CD4-positive, alpha-beta memory T cell (primary cell): ENCODE measurements at regions of chr13 and their contacts with region 1.

Region 1: GRCh38 chr13:74287724-74288169 is 153.5 kb upstream of the KLF12 start:
- DNase-seq: peak; percentile 87 to 98 (median 93)
- H3K4me3 ChIP-seq: peak overlapping the region; percentile 1 to 5
- H3K4me3 Mint-ChIP-seq: peak overlapping the region; percentile 75 to 89 (median 84)
- H3K27ac ChIP-seq: peak overlapping the region; percentile 56
- H3K27ac Mint-ChIP-seq: peak overlapping the region; percentile 94 to 98 (median 97)
- H3K4me1 ChIP-seq: peaks cover 53% of the 10 kb centered on the region
- H3K4me1 Mint-ChIP-seq: peaks cover 50 to 72% (median 60%) of the 10 kb centered on the region in 4 donors
- H3K27me3 ChIP-seq: no peaks in the 10 kb centered on the region
- H3K27me3 Mint-ChIP-seq: peaks cover 0 to 3% of the 10 kb centered on the region in 2 donors

Region 2: DNA sequence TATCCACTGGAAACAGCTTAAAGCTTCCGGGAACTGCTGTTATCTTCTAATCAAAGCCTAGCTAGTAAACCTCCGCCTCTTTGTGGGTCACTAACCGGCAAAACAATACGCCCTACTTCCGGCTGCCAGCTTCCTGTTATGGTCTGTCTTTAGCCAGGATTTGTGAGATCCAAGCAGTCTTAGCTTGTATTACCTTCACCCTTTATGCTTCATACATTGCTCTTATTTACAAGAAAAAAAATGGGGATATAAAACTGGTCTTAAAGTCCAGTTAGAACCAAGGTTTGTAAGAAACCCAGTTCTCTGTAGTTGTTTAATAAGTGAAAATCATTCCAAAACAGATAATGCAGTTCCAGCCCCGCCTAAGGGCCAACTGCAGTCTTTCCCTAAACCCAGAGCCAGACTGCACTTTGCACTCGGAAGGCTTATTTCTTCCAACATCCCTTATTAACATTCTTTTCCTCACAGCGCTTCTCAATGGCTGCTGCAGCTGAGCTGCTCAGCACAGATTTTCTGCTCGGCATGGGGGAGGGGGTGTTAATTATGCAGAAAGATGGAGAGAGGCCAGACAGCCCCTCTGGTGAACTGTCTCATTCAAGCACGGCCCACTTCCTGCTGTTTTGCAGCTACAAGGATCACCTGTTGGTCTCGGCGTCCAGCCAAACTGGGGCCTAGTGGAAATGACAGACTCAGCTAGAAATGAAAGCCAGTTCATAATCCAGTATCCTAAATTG is 521.9 kb before region 1 on chr13:
- CTCF ChIA-PET with region 1: interaction called, 28 read pairs
- POLR2A ChIA-PET with region 1: interaction called, 30 read pairs
- intact Hi-C with region 1: loop called (anchors 5 kb)
- DNase-seq: peak; percentile 73 to 93 (median 78)
- H3K4me3 ChIP-seq: peak overlapping the region; percentile 14 to 40
- H3K4me3 Mint-ChIP-seq: peak overlapping the region; percentile 78 to 92 (median 84)
- H3K27ac ChIP-seq: peak overlapping the region; percentile 47
- H3K27ac Mint-ChIP-seq: peak overlapping the region; percentile 96 to 99 (median 96)
- H3K4me1 ChIP-seq: peaks cover 84% of the 10 kb centered on the region
- H3K4me1 Mint-ChIP-seq: peaks cover 72 to 86% (median 80%) of the 10 kb centered on the region in 4 donors
- H3K27me3 ChIP-seq: no peaks in the 10 kb centered on the region
- H3K27me3 Mint-ChIP-seq: no peaks in the 10 kb centered on the region

Region 3: GRCh38 chr13:73861136-73861535 is 426.6 kb before region 1 on chr13:
- CTCF ChIA-PET with region 1: interaction called, 13 read pairs
- POLR2A ChIA-PET with region 1: interaction called, 4 read pairs
- intact Hi-C with region 1: no loop called
- DNase-seq: peak in 2 of 5 donors; percentile 9 to 39
- H3K4me3 ChIP-seq: no peak overlapping the region
- H3K4me3 Mint-ChIP-seq: peak overlapping the region in 7 of 8 donors; percentile 9 to 78 (median 55)
- H3K27ac ChIP-seq: no peak overlapping the region
- H3K27ac Mint-ChIP-seq: peak overlapping the region; percentile 33 to 86 (median 66)
- H3K4me1 ChIP-seq: peaks cover 80% of the 10 kb centered on the region
- H3K4me1 Mint-ChIP-seq: peaks cover 48 to 57% (median 54%) of the 10 kb centered on the region in 4 donors
- H3K27me3 ChIP-seq: no peaks in the 10 kb centered on the region
- H3K27me3 Mint-ChIP-seq: no peaks in the 10 kb centered on the region

Region 4: GRCh38 chr13:74026753-74027152 is 261.0 kb before region 1 on chr13:
- CTCF ChIA-PET with region 1: interaction called, 15 read pairs
- POLR2A ChIA-PET with region 1: interaction called, 14 read pairs
- intact Hi-C with region 1: loop called (anchors 1 kb)
- DNase-seq: peak; percentile 63 to 88 (median 68)
- H3K4me3 ChIP-seq: peak overlapping the region in 1 of 2 donors; percentile 36
- H3K4me3 Mint-ChIP-seq: peak overlapping the region; percentile 79 to 93 (median 86)
- H3K27ac ChIP-seq: peak overlapping the region; percentile 54
- H3K27ac Mint-ChIP-seq: peak overlapping the region; percentile 87 to 97 (median 94)
- H3K4me1 ChIP-seq: peaks cover 83% of the 10 kb centered on the region
- H3K4me1 Mint-ChIP-seq: peaks cover 71 to 91% (median 81%) of the 10 kb centered on the region in 4 donors
- H3K27me3 ChIP-seq: no peaks in the 10 kb centered on the region
- H3K27me3 Mint-ChIP-seq: no peaks in the 10 kb centered on the region

Region 5: GRCh38 chr13:74070065-74070464 is 217.7 kb before region 1 on chr13:
- CTCF ChIA-PET with region 1: interaction called, 10 read pairs
- POLR2A ChIA-PET with region 1: interaction called, 40 read pairs
- intact Hi-C with region 1: loop called (anchors 2 kb)
- DNase-seq: peak; percentile 73 to 81 (median 75)
- H3K4me3 ChIP-seq: peak overlapping the region in 1 of 2 donors; percentile 43
- H3K4me3 Mint-ChIP-seq: peak overlapping the region; percentile 68 to 89 (median 79)
- H3K27ac ChIP-seq: peak overlapping the region; percentile 15
- H3K27ac Mint-ChIP-seq: peak overlapping the region; percentile 73 to 94 (median 89)
- H3K4me1 ChIP-seq: peaks cover 92% of the 10 kb centered on the region
- H3K4me1 Mint-ChIP-seq: peaks cover 64 to 85% (median 77%) of the 10 kb centered on the region in 4 donors
- H3K27me3 ChIP-seq: no peaks in the 10 kb centered on the region
- H3K27me3 Mint-ChIP-seq: no peaks in the 10 kb centered on the region

Region 6: GRCh38 chr13:74226791-74227475 is 60.8 kb before region 1 on chr13:
- CTCF ChIA-PET with region 1: interaction called, 31 read pairs
- POLR2A ChIA-PET with region 1: interaction called, 55 read pairs
- intact Hi-C with region 1: loop called (anchors 1 kb)
- DNase-seq: no peak
- H3K4me3 ChIP-seq: no peak overlapping the region
- H3K4me3 Mint-ChIP-seq: no peak overlapping the region
- H3K27ac ChIP-seq: no peak overlapping the region
- H3K27ac Mint-ChIP-seq: no peak overlapping the region
- H3K4me1 ChIP-seq: peaks cover 24% of the 10 kb centered on the region
- H3K4me1 Mint-ChIP-seq: peaks cover 14 to 31% (median 20%) of the 10 kb centered on the region in 4 donors
- H3K27me3 ChIP-seq: no peaks in the 10 kb centered on the region
- H3K27me3 Mint-ChIP-seq: no peaks in the 10 kb centered on the region

Region 7: DNA sequence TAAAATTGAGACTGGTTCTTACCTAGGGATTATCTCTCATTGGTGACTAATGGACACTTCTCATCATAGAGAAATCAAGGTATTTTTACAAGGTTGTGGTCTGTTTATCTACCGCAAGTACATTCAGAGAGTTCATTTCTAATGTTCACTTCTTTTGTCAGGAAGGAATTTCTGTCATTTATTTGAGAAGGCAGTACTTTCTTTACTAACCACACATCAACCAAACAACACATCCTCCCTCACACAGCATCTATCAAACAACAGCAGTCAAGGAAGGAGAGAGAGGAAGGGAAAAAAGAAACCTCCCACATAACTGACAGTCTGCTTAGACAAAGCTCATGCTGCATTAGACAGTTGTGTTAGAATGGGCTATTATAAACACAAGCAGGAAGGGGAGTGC is 28.8 kb after region 1 on chr13:
- CTCF ChIA-PET with region 1: interaction called, 15 read pairs
- POLR2A ChIA-PET with region 1: interaction called, 3 read pairs
- intact Hi-C with region 1: no loop called
- DNase-seq: no peak
- H3K4me3 ChIP-seq: no peak overlapping the region
- H3K4me3 Mint-ChIP-seq: no peak overlapping the region
- H3K27ac ChIP-seq: no peak overlapping the region
- H3K27ac Mint-ChIP-seq: peak overlapping the region in 4 of 7 donors; percentile 0 to 62 (median 20)
- H3K4me1 ChIP-seq: peaks cover 7% of the 10 kb centered on the region
- H3K4me1 Mint-ChIP-seq: peaks cover 5 to 16% (median 8%) of the 10 kb centered on the region in 4 donors
- H3K27me3 ChIP-seq: no peaks in the 10 kb centered on the region
- H3K27me3 Mint-ChIP-seq: no peaks in the 10 kb centered on the region